Mucosa of descending colon (tissue), 3 donors: ENCODE measurements at regions of chr22 and their contacts with region 1.

Region 1: GRCh38 chr22:49767355-49768062 is 60.2 kb downstream of the BRD1 start:
- DNase-seq: peak; percentile 22 to 29 (median 28)
- ATAC-seq: peak; percentile 51
- H3K4me3 ChIP-seq: no peak overlapping the region
- H3K4me1 ChIP-seq: no peaks in the 10 kb centered on the region
- CTCF ChIP-seq: peak; percentile 35

Region 2: GRCh38 chr22:49149721-49150608 is 617.5 kb before region 1 on chr22:
- intact Hi-C with region 1: no loop called
- DNase-seq: no peak
- ATAC-seq: no peak
- H3K4me3 ChIP-seq: no peak overlapping the region
- H3K4me1 ChIP-seq: no peaks in the 10 kb centered on the region
- CTCF ChIP-seq: no peak

Region 3: DNA sequence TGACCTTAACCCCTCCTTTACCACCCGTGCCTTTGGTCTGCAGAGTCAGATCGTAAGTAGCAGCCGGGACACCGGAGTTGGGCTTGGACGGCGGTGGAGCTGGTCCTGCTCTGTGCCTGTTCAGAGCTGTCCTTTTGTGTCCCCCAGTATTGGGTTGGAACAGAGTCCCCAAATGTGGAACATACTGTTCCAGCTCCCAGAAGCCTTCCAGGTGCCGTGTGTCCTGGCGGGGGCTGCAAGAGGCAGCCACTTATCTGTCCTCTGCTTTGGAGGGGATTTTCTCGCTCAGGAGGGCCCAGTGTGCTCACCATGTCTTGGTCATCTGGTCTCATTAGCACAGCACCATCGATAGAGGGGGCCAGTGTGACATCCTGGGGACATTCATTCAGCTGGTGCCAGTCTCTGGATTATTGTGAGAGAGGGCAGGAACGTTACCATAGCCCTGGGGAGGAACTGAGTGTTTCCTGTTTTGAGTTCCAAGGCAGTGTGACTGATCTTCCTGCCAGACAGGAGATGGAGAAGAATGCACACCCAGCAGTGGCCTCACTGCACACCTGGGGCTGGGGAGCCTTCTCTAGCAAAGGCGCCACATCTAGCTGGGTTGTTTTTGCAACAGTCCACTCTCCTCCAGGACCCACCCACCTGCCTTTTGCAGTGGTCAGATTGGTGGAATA is 163.4 kb after region 1 on chr22:
- intact Hi-C with region 1: loop called in 1 of 2 experiments (anchors 10 kb)
- DNase-seq: peak in 2 of 3 donors; percentile 74 to 89
- ATAC-seq: peak; percentile 65
- H3K4me3 ChIP-seq: no peak overlapping the region
- H3K4me1 ChIP-seq: peaks cover 35% of the 10 kb centered on the region
- CTCF ChIP-seq: peak; percentile 27

Region 4: DNA sequence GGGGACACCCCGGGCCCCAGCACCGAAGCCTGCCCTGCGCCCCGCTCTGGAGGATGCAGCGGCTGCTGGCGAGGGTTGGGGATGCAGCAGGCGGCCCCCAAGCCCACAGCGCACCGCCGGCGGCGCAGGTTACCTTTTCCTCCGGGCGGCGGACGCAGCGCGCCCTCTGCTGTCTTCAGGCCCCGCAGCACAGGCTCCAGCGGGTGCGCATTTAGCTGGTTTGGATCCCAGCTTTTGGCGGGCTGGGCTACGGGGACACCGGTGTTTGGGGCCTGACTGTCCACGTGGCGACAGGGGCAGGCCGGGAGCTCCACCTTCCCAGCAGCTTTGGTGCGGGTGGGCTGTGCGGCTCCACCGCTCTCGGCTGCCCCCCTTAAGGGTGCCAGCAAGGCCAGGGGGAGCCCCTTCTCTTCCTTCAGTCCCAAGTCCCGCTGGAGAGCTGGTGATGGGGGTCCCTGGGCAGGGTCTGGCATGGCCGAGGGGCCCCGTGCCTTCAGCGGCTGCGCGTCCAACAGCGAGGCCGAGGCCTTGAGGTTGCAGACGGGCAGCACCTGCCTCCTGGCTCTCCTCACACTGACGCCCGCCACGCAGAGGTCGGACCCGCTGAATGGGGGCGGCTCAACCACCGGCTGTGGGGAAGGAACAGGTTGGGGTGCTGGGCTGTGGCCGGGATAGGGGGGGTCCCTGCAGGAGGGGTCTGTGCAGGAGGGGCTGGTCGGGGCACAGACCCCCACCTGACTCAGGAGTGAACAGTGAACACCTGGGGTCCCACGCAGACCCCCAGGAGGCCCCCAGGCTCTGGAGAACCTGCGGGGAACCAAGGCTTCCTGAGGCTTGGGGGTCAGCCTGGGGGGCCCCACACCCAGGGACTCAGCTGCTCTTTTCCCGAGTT is 263.0 kb after region 1 on chr22:
- intact Hi-C with region 1: loop called in 1 of 2 experiments (anchors 10 kb)
- DNase-seq: peak; percentile 79 to 81 (median 80)
- ATAC-seq: peak; percentile 97
- H3K4me3 ChIP-seq: no peak overlapping the region
- H3K4me1 ChIP-seq: no peaks in the 10 kb centered on the region
- CTCF ChIP-seq: peak; percentile 78